Colonic mucosa (tissue), 4 donors: ENCODE measurements at regions of chr4 and their contacts with region 1.

Region 1: GRCh38 chr4:121072224-121073003 is at the start of gene NDNF:
- DNase-seq: peak; percentile 85
- H3K4me3 ChIP-seq: peak within 1 kb of the TSS; percentile 60
- H3K27ac ChIP-seq: peak within 1 kb of the TSS; percentile 69
- H3K4me1 ChIP-seq: peaks cover 4% of the 10 kb centered on the region
- H3K27me3 ChIP-seq: no peaks in the 10 kb centered on the region
- CTCF ChIP-seq: no peak
- total RNA-seq, gene NDNF: 8.9 to 30.4 TPM

Region 2: DNA sequence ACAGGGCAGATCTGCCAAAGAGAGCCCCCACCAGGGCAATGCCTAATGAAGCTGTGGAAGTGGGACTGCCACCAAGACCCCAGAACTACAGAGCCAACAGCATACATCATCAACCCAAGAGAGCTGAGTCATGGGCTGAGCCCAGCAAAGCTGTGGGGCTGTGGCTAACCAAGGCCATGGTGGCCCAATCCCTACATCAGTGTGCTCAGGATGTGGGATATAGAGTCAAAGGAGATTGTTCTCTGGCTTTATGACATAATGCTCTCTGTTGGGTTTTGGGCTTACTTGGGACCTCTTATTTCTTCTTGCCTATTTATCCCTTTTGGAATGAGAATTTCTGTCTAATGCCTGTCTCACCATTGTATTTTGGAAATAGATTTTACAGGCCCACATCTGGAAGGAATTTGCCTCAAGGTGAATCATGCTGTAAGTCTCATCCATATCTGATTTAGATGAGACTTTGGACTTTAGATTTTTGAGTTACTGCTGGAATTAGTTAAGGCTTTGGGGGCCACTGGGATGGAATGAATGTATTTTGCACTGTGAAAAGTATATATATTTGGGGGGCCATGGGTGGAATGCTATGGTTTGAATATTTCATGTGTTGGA is 144.5 kb before region 1 on chr4:
- intact Hi-C with region 1: loop called (anchors 5 kb)
- DNase-seq: no peak
- H3K4me3 ChIP-seq: no peak overlapping the region
- H3K27ac ChIP-seq: no peak overlapping the region
- H3K4me1 ChIP-seq: no peaks in the 10 kb centered on the region
- H3K27me3 ChIP-seq: no peaks in the 10 kb centered on the region
- CTCF ChIP-seq: no peak